Activated T-helper 2 cell treated with anti-CD3 and anti-CD28 coated beads, Interferon-gamma antibody, Interleukin-2, Interleukin-4, amounts not matched to agents 10 μg/mL and 5 μg/mL and 100 μg/mL, durations not matched to agents 14 hours and 24 hours and 36 hours (primary cell): ENCODE measurements at regions of chr4 and their contacts with region 1.

Region 1: GRCh38 chr4:42282081-42282901 is 115.0 kb upstream of the SHISA3 start:
- DNase-seq: peak; percentile 12
- H3K4me3 Mint-ChIP-seq: no peak overlapping the region
- H3K27ac Mint-ChIP-seq: no peak overlapping the region
- H3K4me1 Mint-ChIP-seq: peaks cover 5% of the 10 kb centered on the region
- H3K27me3 Mint-ChIP-seq: peaks cover 12% of the 10 kb centered on the region

Region 2: DNA sequence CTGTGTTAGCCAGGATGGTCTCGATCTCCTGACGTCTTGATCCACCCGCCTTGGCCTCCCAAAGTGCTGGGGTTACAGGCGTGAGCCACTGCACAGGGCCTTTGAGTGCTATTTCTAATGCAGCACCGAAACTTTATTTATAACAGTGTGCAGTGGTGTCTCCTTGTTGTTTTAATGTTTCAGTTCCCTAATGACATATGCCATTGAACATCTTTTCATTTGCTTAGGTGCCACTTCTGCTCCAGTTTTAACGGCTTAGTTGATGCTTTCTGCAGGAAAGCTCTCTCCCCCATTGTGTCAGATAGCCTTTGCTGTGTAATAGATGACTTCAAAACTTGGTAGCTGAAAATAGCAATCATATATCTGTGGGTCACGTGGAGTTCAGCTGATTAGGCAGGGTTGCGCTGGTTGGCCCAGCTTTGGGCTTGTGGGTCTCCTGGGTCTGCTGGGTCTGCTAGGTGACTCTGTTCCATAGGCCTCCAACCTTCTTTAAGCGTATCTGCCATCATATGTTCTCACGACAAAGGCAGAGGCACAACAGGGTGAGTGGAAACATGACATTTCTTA is 38.6 kb after region 1 on chr4:
- intact Hi-C with region 1: no loop called
- DNase-seq: no peak
- H3K4me3 Mint-ChIP-seq: no peak overlapping the region
- H3K27ac Mint-ChIP-seq: no peak overlapping the region
- H3K4me1 Mint-ChIP-seq: no peaks in the 10 kb centered on the region
- H3K27me3 Mint-ChIP-seq: peaks cover 2% of the 10 kb centered on the region

Region 3: GRCh38 chr4:42396752-42397634 is 114.7 kb after region 1 on chr4 and contains the start of gene SHISA3:
- intact Hi-C with region 1: loop called (anchors 10 kb)
- DNase-seq: peak; percentile 20
- H3K4me3 Mint-ChIP-seq: peak within 1 kb of the TSS; percentile 79
- H3K27ac Mint-ChIP-seq: no peak within 1 kb of the TSS
- H3K4me1 Mint-ChIP-seq: peaks cover 15% of the 10 kb centered on the region
- H3K27me3 Mint-ChIP-seq: peaks cover 65% of the 10 kb centered on the region
- total RNA-seq, gene SHISA3: 0.80 and 1.2 TPM in 2 replicates

Region 4: DNA sequence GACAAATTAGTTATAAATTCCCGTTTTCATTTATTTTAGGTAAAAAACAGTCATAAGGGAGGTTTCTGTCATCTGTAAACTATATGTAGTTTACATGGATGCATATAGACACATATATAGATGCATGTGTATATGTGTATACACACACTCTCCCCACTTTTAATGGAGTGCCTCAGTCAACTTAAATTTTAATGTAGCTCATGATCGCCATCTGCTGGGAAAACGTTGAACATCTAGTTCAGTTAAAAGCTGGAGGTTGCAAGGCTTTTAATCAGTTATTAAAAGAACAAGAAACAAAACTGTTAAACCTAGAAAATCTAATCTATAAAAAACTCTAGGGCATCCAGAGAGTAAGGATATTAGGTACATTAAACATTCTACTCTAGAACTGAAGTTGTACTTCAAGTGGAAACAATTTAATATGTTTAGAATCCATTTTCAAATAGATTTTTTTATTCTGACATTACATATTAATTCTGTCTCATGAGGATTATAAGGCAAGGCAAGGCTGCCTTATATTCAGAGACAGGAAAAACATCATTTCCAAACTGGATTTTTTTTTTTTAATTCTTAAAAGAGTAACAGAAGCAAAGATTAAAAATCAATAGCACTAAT is 237.6 kb after region 1 on chr4:
- intact Hi-C with region 1: loop called (anchors 1 kb)
- DNase-seq: no peak
- H3K4me3 Mint-ChIP-seq: no peak overlapping the region
- H3K27ac Mint-ChIP-seq: no peak overlapping the region
- H3K4me1 Mint-ChIP-seq: peaks cover 4% of the 10 kb centered on the region
- H3K27me3 Mint-ChIP-seq: no peaks in the 10 kb centered on the region

Region 5: DNA sequence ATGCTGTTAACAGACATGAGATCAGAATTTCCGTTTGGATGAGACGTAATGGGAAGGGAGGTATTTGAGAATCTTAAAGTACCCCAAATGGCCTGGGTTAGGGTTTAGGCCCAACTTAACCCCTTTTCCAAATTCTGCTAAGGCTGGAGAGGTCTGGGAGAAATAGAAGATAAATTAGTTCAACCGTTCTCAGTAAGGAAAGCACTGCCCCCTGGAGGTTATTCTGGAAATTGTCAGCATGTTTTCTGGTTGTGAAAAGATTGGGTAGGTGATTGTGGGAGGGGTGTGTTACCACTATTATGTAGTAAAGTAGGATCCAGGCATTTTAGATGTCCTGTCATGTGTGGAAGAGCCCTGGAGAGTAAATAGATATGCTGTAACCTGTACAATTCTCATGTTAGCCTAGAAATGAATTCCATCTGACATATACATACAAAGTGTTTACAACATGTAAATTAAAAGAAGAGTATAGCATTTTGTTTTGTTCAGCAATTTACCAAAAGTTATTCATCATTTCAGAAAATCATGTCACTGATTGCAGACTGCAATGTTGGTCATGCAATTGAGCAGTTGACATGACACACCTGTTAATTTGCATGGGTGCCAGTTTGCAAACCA is 583.4 kb after region 1 on chr4:
- intact Hi-C with region 1: loop called (anchors 5 kb)
- DNase-seq: peak; percentile 21
- H3K4me3 Mint-ChIP-seq: no peak overlapping the region
- H3K27ac Mint-ChIP-seq: no peak overlapping the region
- H3K4me1 Mint-ChIP-seq: no peaks in the 10 kb centered on the region
- H3K27me3 Mint-ChIP-seq: no peaks in the 10 kb centered on the region